Activated B cell treated with CpG ODN at 0.5 μM for 24 hours (primary cell): ENCODE measurements at regions of chr3 and their contacts with region 1.

Region 1: DNA sequence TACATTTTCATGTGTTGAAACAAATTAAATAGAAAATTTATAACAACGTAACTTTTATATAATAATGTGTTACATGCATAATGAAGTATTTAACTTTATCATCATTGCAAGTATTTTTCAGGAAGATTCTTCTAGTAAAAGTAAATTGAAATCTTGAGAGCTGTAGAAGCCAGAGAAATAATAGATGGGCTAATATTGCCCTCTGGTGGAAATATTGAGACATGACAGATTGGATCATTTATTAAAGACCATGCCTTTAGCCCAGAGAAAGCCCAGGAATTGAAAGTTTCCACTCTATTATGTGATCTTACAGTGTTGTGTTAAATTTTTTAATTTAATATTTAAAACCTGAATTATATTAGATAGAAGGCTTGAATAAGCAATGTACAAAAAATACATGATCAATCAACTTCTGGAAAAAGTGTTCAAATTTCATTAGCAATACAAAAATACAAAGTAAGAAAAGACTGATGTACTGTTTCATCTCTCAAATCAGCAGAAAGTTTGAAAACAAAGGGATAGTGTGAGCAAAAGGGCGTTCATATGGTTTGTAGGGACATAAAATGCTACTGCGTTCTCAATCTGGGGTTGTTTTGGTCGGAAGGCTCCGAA is 52.7 kb upstream of the SPTSSB start:
- DNase-seq: no peak
- ATAC-seq: no peak
- H3K4me3 Mint-ChIP-seq: no peak overlapping the region
- H3K27ac Mint-ChIP-seq: no peak overlapping the region
- H3K4me1 Mint-ChIP-seq: no peaks in the 10 kb centered on the region
- H3K27me3 Mint-ChIP-seq: no peaks in the 10 kb centered on the region
- CTCF ChIP-seq: peak; percentile 42

Region 2: DNA sequence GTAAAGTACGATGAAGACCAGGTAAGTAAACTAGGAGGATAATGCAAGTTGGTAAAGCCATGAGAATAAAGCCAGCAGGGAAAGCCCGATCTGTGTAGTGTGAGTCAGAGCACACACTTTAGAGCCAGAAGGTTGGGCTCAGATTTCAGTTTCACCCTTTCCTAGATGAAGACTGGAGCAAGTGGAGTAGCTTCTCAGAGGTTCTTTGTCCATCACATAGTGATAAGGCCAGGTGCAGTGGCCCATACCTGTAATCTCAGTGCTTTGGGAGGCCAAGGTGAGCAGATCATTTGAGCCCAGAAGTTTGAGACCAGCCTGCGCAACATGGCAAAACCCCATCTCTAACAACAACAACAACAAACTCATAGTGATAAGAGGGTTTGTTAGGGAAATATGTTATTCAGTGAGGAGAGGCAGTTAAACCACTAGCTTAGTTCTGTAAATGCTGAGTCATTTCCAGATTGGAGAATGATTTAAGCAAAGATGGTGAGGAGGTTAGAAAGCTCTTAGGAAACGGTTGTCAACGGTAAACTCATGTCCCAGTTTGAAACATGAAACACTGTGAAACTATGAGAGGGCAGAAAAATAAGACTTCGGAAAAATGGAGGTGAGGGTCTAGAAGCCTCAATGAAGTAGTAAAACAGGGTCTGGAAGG is 1396.3 kb before region 1 on chr3:
- CTCF ChIA-PET with region 1: no interaction called
- POLR2A ChIA-PET with region 1: no interaction called
- intact Hi-C with region 1: loop called (anchors 5 kb)
- DNase-seq: no peak
- ATAC-seq: no peak
- H3K4me3 Mint-ChIP-seq: no peak overlapping the region
- H3K27ac Mint-ChIP-seq: peak overlapping the region; percentile 36
- H3K4me1 Mint-ChIP-seq: no peaks in the 10 kb centered on the region
- H3K27me3 Mint-ChIP-seq: no peaks in the 10 kb centered on the region
- CTCF ChIP-seq: no peak

Region 3: GRCh38 chr3:160454995-160455394 is 969.0 kb before region 1 on chr3:
- CTCF ChIA-PET with region 1: no interaction called
- POLR2A ChIA-PET with region 1: no interaction called
- intact Hi-C with region 1: no loop called
- DNase-seq: no peak
- ATAC-seq: no peak
- H3K4me3 Mint-ChIP-seq: no peak overlapping the region
- H3K27ac Mint-ChIP-seq: no peak overlapping the region
- H3K4me1 Mint-ChIP-seq: peaks cover 5% of the 10 kb centered on the region
- H3K27me3 Mint-ChIP-seq: peaks cover 1% of the 10 kb centered on the region
- CTCF ChIP-seq: no peak

Region 4: GRCh38 chr3:160707187-160707794 is 716.7 kb before region 1 on chr3:
- CTCF ChIA-PET with region 1: interaction called, 10 read pairs
- POLR2A ChIA-PET with region 1: no interaction called
- intact Hi-C with region 1: loop called (anchors 1 kb)
- DNase-seq: no peak
- ATAC-seq: peak; percentile 60
- H3K4me3 Mint-ChIP-seq: no peak overlapping the region
- H3K27ac Mint-ChIP-seq: no peak overlapping the region
- H3K4me1 Mint-ChIP-seq: no peaks in the 10 kb centered on the region
- H3K27me3 Mint-ChIP-seq: peaks cover 16% of the 10 kb centered on the region
- CTCF ChIP-seq: no peak

Region 5: DNA sequence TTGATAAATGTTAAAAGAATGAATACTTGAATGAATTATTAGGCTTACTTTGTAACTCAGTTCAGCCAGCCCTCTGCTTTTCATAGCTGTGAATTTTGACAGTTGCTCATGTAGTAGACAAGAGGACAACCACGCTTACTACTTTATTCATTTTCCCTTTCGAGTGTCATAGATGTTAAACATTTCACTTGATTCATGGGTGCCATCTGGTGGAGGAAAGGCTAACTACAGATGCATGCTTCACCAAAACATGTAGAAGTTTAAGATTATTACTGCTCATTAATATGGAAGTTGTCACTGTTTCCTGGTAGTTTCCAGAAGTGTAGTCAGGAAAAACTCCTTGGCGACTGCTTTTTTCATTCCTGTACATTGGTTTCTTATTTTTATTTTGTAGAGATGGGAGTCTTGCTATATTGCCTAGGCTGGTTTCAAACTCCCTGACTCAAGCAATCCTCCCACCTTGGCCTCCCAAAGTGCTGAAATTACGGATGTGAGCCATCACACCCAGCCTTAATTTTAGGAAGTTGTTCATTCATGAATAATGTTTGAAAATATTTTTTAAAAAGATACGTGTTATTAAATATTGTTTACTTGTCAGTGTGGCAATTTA is 482.0 kb before region 1 on chr3:
- CTCF ChIA-PET with region 1: no interaction called
- POLR2A ChIA-PET with region 1: no interaction called
- intact Hi-C with region 1: loop called (anchors 5 kb)
- DNase-seq: no peak
- ATAC-seq: peak; percentile 87
- H3K4me3 Mint-ChIP-seq: no peak overlapping the region
- H3K27ac Mint-ChIP-seq: no peak overlapping the region
- H3K4me1 Mint-ChIP-seq: peaks cover 4% of the 10 kb centered on the region
- H3K27me3 Mint-ChIP-seq: no peaks in the 10 kb centered on the region
- CTCF ChIP-seq: no peak

Region 6: GRCh38 chr3:161096771-161097355 is 327.2 kb before region 1 on chr3:
- CTCF ChIA-PET with region 1: interaction called, 3 read pairs
- POLR2A ChIA-PET with region 1: no interaction called
- intact Hi-C with region 1: loop called (anchors 2 kb)
- DNase-seq: no peak
- ATAC-seq: peak; percentile 21
- H3K4me3 Mint-ChIP-seq: no peak overlapping the region
- H3K27ac Mint-ChIP-seq: no peak overlapping the region
- H3K4me1 Mint-ChIP-seq: no peaks in the 10 kb centered on the region
- H3K27me3 Mint-ChIP-seq: no peaks in the 10 kb centered on the region
- CTCF ChIP-seq: no peak

Region 7: GRCh38 chr3:161379419-161379818 is 44.6 kb before region 1 on chr3:
- CTCF ChIA-PET with region 1: no interaction called
- POLR2A ChIA-PET with region 1: no interaction called
- intact Hi-C with region 1: no loop called
- DNase-seq: no peak
- ATAC-seq: no peak
- H3K4me3 Mint-ChIP-seq: no peak overlapping the region
- H3K27ac Mint-ChIP-seq: no peak overlapping the region
- H3K4me1 Mint-ChIP-seq: no peaks in the 10 kb centered on the region
- H3K27me3 Mint-ChIP-seq: peaks cover 39% of the 10 kb centered on the region
- CTCF ChIP-seq: no peak